ENCODE measurements at regions of chr17 and their contacts with region 1.

Region 1: GRCh38 chr17:57939797-57940196 is 15.4 kb downstream of the CUEDC1 start:
- DNase-seq: peak; percentile 75
- ATAC-seq: peak; percentile 87
- H3K4me3 ChIP-seq: no peak overlapping the region; the same call in 1 of the 2 replicates
- H3K27ac ChIP-seq: no peak overlapping the region
- H3K4me1 ChIP-seq: peaks cover 45% of the 10 kb centered on the region
- H3K27me3 ChIP-seq: no peaks in the 10 kb centered on the region
- CTCF ChIP-seq: no peak
- EP300 ChIP-seq: peak; percentile 66; a peak in 2 of 4 replicates
- POLR2A ChIP-seq: no peak
- RAD21 ChIP-seq: no peak

Region 2: DNA sequence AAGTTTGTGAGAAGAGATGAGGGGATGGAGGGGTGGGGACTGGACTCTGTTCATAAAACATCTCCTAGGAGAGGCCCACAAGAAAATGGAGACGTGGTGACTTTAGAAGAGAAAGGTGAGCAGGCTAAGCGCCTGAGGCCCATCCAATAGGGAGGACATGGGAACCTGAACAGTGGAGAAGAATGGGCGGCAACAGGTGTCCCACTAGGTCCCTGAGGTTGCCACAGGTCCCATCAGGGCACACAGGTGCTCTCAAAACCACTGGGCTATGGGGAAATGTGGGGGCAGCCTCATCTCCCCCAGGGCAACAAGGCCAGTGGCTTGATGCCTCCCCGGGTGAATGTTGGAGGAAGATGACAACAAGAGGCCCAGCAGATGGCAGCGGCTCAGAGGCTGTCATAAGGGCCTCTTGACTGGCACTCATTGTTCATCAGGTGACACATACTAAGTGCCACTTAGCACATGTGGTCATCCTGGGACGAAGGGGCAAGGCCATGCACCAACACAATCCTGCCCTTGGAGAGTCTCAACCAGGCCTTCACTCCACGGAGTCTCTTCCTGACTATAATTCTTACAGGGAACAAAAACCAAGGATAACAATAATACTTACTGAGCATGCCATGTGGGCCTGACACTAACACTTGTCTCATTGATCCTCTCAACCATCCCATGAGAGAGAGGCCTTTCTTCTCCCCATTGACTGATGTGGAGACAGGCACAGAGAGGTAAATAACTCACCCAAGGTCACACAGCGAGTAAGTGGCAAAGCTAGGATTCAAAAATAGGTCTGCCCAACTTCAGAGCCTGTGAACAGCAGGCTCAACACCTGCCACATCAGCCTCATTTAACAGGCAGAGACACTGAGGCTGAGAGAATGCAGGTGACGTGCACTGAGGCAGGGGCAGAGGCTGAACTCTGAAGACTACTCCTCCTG is 22.6 kb before region 1 on chr17:
- CTCF ChIA-PET with region 1: interaction called, 3 read pairs
- POLR2A ChIA-PET with region 1: interaction called, 3 read pairs
- RAD21 ChIA-PET with region 1: interaction called, 3 read pairs
- SMC1A ChIA-PET with region 1: interaction called, 10 read pairs
- in situ Hi-C with region 1: no loop called
- intact Hi-C with region 1: no loop called
- DNase-seq: no peak
- ATAC-seq: peak; percentile 88
- H3K4me3 ChIP-seq: no peak overlapping the region
- H3K27ac ChIP-seq: no peak overlapping the region
- H3K4me1 ChIP-seq: no peaks in the 10 kb centered on the region
- H3K27me3 ChIP-seq: no peaks in the 10 kb centered on the region
- CTCF ChIP-seq: peak; percentile 17 to 33 (median 29); a peak in 4 of 6 replicates
- EP300 ChIP-seq: no peak
- POLR2A ChIP-seq: no peak
- RAD21 ChIP-seq: peak; percentile 48; the same call in 1 of the 2 replicates

Region 3: DNA sequence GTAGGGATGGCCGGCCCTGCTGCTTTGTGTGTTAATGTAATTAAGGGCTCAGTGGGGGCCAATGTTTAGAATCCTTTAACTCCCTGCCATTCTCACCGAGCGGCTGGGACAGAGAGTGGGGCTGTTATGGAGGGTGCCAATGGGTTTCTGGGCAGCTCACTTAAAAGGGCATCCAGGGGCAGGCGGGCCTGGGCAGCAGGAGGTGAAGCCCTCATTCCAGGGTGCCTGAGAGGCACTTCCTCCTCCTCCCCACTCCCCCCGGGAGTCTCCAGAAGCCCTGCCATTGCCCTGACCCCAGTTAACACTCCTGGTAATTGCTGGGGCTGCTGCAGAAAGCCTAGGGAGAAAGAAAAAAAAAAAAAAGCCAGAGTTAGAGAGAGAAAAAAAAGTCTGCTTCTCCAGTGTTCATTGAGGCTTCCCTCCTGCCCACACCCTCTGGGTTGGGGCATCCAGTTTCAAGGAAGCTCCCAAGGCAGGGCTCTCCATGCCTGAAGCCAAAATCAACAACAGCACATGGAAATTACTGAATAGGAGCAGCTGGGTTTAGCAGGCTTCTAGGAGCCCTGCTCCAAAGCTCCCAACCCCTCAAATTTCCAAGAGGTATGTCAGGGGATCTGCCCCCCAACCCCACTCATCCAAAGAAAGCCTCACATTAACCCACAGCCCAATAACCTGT is 12.6 kb before region 1 on chr17:
- CTCF ChIA-PET with region 1: interaction called, 6 read pairs
- POLR2A ChIA-PET with region 1: interaction called, 4 read pairs
- RAD21 ChIA-PET with region 1: interaction called, 3 read pairs
- SMC1A ChIA-PET with region 1: interaction called, 10 read pairs
- in situ Hi-C with region 1: no loop called
- intact Hi-C with region 1: no loop called
- DNase-seq: no peak
- ATAC-seq: no peak
- H3K4me3 ChIP-seq: no peak overlapping the region
- H3K27ac ChIP-seq: no peak overlapping the region
- H3K4me1 ChIP-seq: peaks cover 5% of the 10 kb centered on the region
- H3K27me3 ChIP-seq: no peaks in the 10 kb centered on the region
- CTCF ChIP-seq: no peak
- EP300 ChIP-seq: no peak
- POLR2A ChIP-seq: no peak
- RAD21 ChIP-seq: no peak

Region 4: DNA sequence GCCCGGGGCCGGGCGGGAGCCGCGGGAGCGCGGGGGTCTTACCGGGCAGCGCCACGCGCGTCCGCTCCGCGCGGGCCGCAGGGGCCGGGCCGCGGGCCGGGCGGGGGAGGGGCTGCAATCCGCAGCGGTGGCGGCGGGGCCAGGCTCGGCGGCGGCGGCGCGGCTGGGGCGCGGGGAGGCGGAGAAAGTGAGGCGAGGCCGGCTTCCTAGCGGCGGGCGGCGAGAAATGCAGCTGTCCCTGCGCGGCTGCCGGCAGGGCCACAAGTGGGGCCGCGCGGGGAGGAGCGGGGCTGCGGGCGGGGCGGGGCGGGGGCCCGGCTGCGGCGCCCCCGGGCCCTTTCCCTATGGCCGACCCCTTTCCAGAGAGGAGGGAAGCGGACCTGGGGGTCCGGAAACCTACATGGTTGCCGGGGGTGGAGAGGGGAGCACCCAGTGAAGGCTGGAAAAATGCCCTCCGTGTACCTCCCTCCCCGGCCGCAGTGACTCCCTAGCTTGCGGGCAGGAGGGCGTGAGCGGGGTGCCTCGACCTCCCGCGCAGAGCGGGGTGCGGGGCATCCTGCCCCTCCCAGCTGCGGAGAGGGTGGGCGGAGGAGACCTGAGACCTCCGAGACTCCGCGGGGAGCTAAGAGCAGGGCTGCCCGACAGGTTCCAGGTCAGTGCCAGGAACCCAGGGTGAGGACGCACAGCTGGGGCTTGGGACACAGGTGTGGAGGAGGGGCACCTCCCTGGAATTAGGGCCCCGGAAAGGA is 15.6 kb after region 1 on chr17 and contains the start of gene CUEDC1:
- CTCF ChIA-PET with region 1: interaction called, 77 read pairs
- POLR2A ChIA-PET with region 1: interaction called, 51 read pairs
- RAD21 ChIA-PET with region 1: interaction called, 66 read pairs
- SMC1A ChIA-PET with region 1: interaction called, 138 read pairs
- in situ Hi-C with region 1: no loop called
- intact Hi-C with region 1: no loop called
- DNase-seq: no peak
- ATAC-seq: peak; percentile 79
- H3K4me3 ChIP-seq: peak within 1 kb of the TSS; percentile 74
- H3K27ac ChIP-seq: no peak within 1 kb of the TSS
- H3K4me1 ChIP-seq: peaks cover 23% of the 10 kb centered on the region
- H3K27me3 ChIP-seq: peaks cover 0 to 2% of the 10 kb centered on the region in 2 experiments; a peak in 2 of 4 replicates
- CTCF ChIP-seq: peak in 2 of 3 experiments; percentile 27 to 29; a peak in 2 of 6 replicates
- EP300 ChIP-seq: no peak
- POLR2A ChIP-seq: no peak
- RAD21 ChIP-seq: no peak
- polyA plus RNA-seq, gene CUEDC1: 0.24 to 0.80 TPM

Region 5: DNA sequence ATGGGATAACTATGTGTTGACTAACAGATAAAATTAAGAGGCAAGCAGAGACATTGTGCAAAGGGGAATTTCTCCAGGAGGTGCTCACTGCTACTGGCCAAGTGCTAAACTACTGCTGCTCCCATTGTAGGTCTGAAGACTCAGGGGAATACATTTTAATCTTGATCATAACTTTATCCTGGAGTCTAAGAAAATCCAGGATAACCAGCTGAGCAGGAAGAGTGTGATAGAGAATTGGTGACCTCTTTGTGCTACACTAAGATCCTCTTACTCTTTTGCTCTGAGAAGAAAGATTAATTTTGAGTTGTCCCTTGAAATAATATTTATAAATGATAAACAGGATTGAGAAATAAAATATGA is 471.6 kb after region 1 on chr17:
- CTCF ChIA-PET with region 1: no interaction called
- POLR2A ChIA-PET with region 1: no interaction called
- RAD21 ChIA-PET with region 1: no interaction called
- SMC1A ChIA-PET with region 1: no interaction called
- in situ Hi-C with region 1: no loop called
- intact Hi-C with region 1: no loop called
- DNase-seq: no peak
- ATAC-seq: peak; percentile 11; the same call in 2 of the 3 replicates
- H3K4me3 ChIP-seq: peak overlapping the region; percentile 57
- H3K27ac ChIP-seq: peak overlapping the region; percentile 48
- H3K4me1 ChIP-seq: no peaks in the 10 kb centered on the region
- H3K27me3 ChIP-seq: no peaks in the 10 kb centered on the region; a peak in 1 of 4 replicates
- CTCF ChIP-seq: no peak
- EP300 ChIP-seq: no peak
- POLR2A ChIP-seq: no peak
- RAD21 ChIP-seq: no peak